HCT116 (cell line): ENCODE measurements at regions of chr18 and their contacts with region 1.

Region 1: GRCh38 chr18:77811503-77811902 is 561.9 kb downstream of the GALR1 start:
- DNase-seq: no peak
- ATAC-seq: no peak
- H3K4me3 ChIP-seq: no peak overlapping the region
- H3K27ac ChIP-seq: no peak overlapping the region
- H3K4me1 ChIP-seq: no peaks in the 10 kb centered on the region
- H3K27me3 ChIP-seq: no peaks in the 10 kb centered on the region
- CTCF ChIP-seq: no peak
- POLR2A ChIP-seq: no peak
- RAD21 ChIP-seq: no peak

Region 2: GRCh38 chr18:77833807-77834206 is 22.3 kb after region 1 on chr18:
- CTCF ChIA-PET with region 1: no interaction called
- POLR2A ChIA-PET with region 1: no interaction called
- RAD21 ChIA-PET with region 1: no interaction called
- intact Hi-C with region 1: loop called (anchors 1 kb)
- DNase-seq: no peak
- ATAC-seq: no peak
- H3K4me3 ChIP-seq: no peak overlapping the region
- H3K27ac ChIP-seq: no peak overlapping the region
- H3K4me1 ChIP-seq: no peaks in the 10 kb centered on the region
- H3K27me3 ChIP-seq: no peaks in the 10 kb centered on the region
- CTCF ChIP-seq: no peak
- POLR2A ChIP-seq: no peak
- RAD21 ChIP-seq: no peak